ENCODE measurements at regions of chr1 and their contacts with region 1.

Region 1: GRCh38 chr1:217791091-217791490 is 159.9 kb downstream of the SPATA17 start:
- DNase-seq: no peak
- H3K4me3 Mint-ChIP-seq: no peak overlapping the region
- H3K27ac Mint-ChIP-seq: no peak overlapping the region
- H3K4me1 Mint-ChIP-seq: no peaks in the 10 kb centered on the region
- H3K27me3 Mint-ChIP-seq: no peaks in the 10 kb centered on the region
- CTCF ChIP-seq: no peak

Region 2: DNA sequence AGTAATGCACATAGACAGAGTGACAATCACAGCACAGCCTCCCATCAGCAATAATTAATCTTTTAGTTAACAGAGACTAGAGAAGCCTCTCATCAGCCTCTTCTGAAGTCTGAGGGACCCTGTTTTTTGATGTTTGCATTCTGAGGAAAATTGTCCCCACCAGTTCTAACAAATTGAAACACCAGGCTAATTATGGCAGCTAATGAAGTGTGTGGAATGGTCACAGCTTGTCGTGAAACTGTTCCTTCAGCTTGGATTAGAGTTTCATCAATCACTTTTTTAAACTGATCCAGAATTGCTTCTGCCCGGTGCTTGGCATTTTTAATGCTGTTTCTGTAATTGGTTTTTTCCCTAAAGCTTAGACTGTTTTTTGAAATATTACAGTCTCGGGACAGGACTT is 48.1 kb after region 1 on chr1:
- CTCF ChIA-PET with region 1: no interaction called
- intact Hi-C with region 1: no loop called
- DNase-seq: no peak
- H3K4me3 Mint-ChIP-seq: no peak overlapping the region
- H3K27ac Mint-ChIP-seq: no peak overlapping the region
- H3K4me1 Mint-ChIP-seq: no peaks in the 10 kb centered on the region
- H3K27me3 Mint-ChIP-seq: no peaks in the 10 kb centered on the region
- CTCF ChIP-seq: no peak

Region 3: GRCh38 chr1:218073062-218073461 is 282.0 kb after region 1 on chr1:
- CTCF ChIA-PET with region 1: interaction called, 12 read pairs
- intact Hi-C with region 1: no loop called
- DNase-seq: no peak
- H3K4me3 Mint-ChIP-seq: no peak overlapping the region
- H3K27ac Mint-ChIP-seq: no peak overlapping the region
- H3K4me1 Mint-ChIP-seq: no peaks in the 10 kb centered on the region
- H3K27me3 Mint-ChIP-seq: no peaks in the 10 kb centered on the region
- CTCF ChIP-seq: no peak

Measured in Calu3 (cell line).